Activated B cell treated with CpG ODN at 0.5 μM for 24 hours (primary cell): ENCODE measurements at regions of chr2 and their contacts with region 1.

Region 1: DNA sequence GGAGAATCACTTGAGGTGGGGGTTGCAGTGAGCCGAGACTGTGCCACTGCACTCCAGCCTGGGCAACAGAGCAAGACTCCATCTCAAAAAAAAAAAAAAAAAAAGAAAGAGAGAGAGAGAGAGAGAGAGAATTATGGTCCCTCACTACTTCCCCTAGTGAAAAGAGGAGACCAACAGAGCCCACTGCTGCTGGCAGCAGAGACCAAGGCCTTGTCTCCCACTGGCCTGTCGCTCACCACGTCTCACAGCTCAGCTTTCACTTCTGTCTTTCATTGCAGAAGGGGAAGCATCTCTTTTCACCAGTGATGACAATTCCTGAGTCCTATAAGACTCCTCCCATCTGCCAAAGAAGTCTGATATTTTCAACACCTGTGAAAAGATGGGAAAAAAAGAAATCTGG is 81.3 kb downstream of the CLHC1 start:
- DNase-seq: no peak
- ATAC-seq: peak; percentile 89
- H3K4me3 Mint-ChIP-seq: no peak overlapping the region
- H3K27ac Mint-ChIP-seq: peak overlapping the region; percentile 84
- H3K4me1 Mint-ChIP-seq: peaks cover 54% of the 10 kb centered on the region
- H3K27me3 Mint-ChIP-seq: no peaks in the 10 kb centered on the region
- CTCF ChIP-seq: no peak

Region 2: GRCh38 chr2:55115761-55116597 is 34.9 kb before region 1 on chr2:
- CTCF ChIA-PET with region 1: no interaction called
- POLR2A ChIA-PET with region 1: no interaction called
- intact Hi-C with region 1: loop called (anchors 5 kb)
- DNase-seq: no peak
- ATAC-seq: no peak
- H3K4me3 Mint-ChIP-seq: no peak overlapping the region
- H3K27ac Mint-ChIP-seq: no peak overlapping the region
- H3K4me1 Mint-ChIP-seq: peaks cover 28% of the 10 kb centered on the region
- H3K27me3 Mint-ChIP-seq: peaks cover 2% of the 10 kb centered on the region
- CTCF ChIP-seq: no peak